ENCODE measurements at regions of chr9 and their contacts with region 1.

Region 1: DNA sequence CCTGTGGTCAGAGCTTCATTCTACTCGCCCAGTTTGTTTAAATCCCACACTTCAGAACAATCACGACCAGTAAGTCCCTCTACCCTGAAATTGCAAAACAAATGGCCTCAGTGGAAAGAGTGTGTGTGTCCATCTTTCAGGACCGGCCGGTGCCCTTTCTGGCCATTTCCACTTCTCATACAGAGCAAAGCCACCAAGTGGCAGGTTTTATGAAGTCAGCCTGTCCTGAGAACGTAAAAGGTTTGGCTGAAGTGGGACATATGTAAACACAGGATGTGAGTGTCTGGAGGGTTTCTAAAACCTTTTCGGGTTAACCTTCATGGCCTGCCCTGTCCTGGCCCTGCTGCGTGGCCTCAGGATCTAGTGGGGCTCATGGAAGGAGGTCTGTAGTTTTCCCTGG is 24.7 kb downstream of the NXNL2 start:
- DNase-seq: no peak
- H3K4me3 ChIP-seq: no peak overlapping the region
- H3K27ac ChIP-seq: no peak overlapping the region
- H3K4me1 ChIP-seq: no peaks in the 10 kb centered on the region
- H3K27me3 ChIP-seq: no peaks in the 10 kb centered on the region
- CTCF ChIP-seq: no peak
- EP300 ChIP-seq: no peak
- POLR2A ChIP-seq: no peak

Region 2: DNA sequence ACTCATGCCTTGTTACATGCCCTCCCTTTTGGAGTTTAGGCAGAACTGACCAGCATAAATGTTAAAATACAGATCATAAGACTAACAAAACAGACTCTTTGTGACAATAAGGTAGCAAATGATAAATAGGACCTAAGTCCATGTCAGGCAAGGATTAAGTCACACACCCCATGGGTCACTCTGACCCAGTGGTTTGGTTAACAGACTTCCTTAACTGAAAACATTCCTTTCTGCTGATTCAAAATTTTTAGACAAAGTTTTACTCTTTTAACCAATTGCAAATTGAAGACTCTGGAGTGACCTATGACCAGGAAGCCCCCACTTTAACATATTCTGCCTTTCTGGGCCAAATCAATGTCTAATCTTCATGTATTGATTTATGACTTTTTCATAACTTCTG is 29.6 kb before region 1 on chr9:
- in situ Hi-C with region 1: no loop called
- intact Hi-C with region 1: loop called (anchors 1 kb)
- DNase-seq: no peak
- H3K4me3 ChIP-seq: no peak overlapping the region
- H3K27ac ChIP-seq: peak overlapping the region in 1 of 4 donors; percentile 17
- H3K4me1 ChIP-seq: peaks cover 1 to 8% (median 5%) of the 10 kb centered on the region in 4 donors
- H3K27me3 ChIP-seq: peaks cover 25% of the 10 kb centered on the region
- CTCF ChIP-seq: no peak
- EP300 ChIP-seq: no peak
- POLR2A ChIP-seq: no peak

Measured in transverse colon (tissue), 4 donors.